ENCODE measurements at regions of chrX and their contacts with region 1.

Region 1: GRCh38 chrX:120316589-120317283 is 5.5 kb upstream of the TMEM255A start:
- DNase-seq: no peak
- H3K4me3 Mint-ChIP-seq: no peak overlapping the region
- H3K27ac Mint-ChIP-seq: no peak overlapping the region
- H3K4me1 Mint-ChIP-seq: no peaks in the 10 kb centered on the region
- H3K27me3 Mint-ChIP-seq: peaks cover 38% of the 10 kb centered on the region

Region 2: DNA sequence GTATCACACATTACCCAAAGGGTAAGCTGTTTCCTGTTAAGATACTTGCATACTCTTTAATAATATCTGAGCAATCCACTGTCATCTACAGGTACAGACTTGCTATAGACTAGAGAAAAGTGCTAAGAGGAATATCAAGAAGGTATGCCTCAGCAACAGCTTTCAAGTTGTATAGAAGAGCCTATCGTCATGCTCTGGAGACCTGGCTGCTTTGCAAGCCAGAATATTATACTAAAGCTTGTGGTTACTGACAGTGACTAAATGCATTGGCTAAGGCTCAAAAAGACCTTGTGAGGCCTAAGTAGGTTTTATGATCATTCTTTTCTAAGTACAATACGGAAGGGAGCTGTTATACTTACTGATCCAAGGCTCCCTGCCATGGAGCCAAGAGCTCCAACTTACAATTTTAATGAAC is 141.0 kb after region 1 on chrX:
- intact Hi-C with region 1: loop called (anchors 5 kb)
- DNase-seq: no peak
- H3K4me3 Mint-ChIP-seq: peak overlapping the region; percentile 50
- H3K27ac Mint-ChIP-seq: peak overlapping the region; percentile 59
- H3K4me1 Mint-ChIP-seq: peaks cover 39% of the 10 kb centered on the region
- H3K27me3 Mint-ChIP-seq: no peaks in the 10 kb centered on the region

Region 3: DNA sequence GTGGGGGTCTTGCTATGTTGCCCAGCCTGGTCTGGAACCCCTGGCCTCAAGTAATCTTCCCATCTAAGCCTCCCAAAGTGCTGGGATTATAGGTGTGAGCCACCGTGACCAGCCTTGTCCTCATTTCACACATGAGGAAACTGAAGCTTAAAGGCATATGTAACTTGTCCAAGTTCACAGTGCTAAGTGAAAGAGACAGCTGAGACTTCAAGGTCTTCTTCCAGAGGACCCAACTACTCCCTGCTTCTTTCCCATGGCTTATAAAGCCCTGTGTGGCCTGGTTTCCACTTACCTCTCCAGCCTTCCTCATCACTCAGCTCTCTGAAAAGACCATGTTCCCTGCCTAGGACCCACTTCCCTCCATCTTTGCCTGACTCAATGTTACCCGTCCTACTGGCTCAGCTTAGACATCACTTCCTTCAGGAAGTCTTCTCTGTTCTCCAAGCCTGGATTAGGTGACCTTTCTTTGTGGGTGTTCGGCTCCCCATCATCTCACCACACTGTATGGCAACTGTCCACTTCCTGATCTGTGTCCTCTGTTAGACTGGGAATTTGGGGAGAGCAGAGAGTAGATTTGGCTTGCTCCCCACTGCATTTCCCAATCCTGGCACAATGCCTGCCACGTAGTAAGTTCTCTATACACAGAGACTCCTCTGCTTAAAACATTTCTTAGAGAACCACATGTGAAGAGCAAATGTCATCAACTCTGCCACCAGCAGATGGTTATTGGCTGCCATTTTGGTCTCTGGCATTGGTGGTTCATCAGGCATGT is 182.8 kb after region 1 on chrX:
- intact Hi-C with region 1: no loop called
- DNase-seq: no peak
- H3K4me3 Mint-ChIP-seq: no peak overlapping the region
- H3K27ac Mint-ChIP-seq: no peak overlapping the region
- H3K4me1 Mint-ChIP-seq: peaks cover 6% of the 10 kb centered on the region
- H3K27me3 Mint-ChIP-seq: no peaks in the 10 kb centered on the region

Measured in activated T-helper 1 cell treated with anti-CD3 and anti-CD28 coated beads, Interleukin-12 subunit alpha, Interleukin-12 subunit beta, Interleukin-2, Interleukin-4 antibody, amounts not matched to agents 30 ng/mL and 10 ng/mL and 1 ng/mL, durations not matched to agents 14 hours and 24 hours and 36 hours (primary cell).